Dendritic cell treated with granulocyte-macrophage colony-stimulating factor and Interleukin-4, amounts not matched to agents 40 ng/mL and 50 ng/mL, for 4 days (primary cell): ENCODE measurements at regions of chr7 and their contacts with region 1.

Region 1: GRCh38 chr7:140182917-140183316 is 6.1 kb upstream of the KDM7A start:
- H3K4me3 Mint-ChIP-seq: no peak overlapping the region
- H3K27ac Mint-ChIP-seq: no peak overlapping the region
- H3K4me1 Mint-ChIP-seq: peaks cover 17% of the 10 kb centered on the region
- H3K27me3 Mint-ChIP-seq: peaks cover 40% of the 10 kb centered on the region

Region 2: DNA sequence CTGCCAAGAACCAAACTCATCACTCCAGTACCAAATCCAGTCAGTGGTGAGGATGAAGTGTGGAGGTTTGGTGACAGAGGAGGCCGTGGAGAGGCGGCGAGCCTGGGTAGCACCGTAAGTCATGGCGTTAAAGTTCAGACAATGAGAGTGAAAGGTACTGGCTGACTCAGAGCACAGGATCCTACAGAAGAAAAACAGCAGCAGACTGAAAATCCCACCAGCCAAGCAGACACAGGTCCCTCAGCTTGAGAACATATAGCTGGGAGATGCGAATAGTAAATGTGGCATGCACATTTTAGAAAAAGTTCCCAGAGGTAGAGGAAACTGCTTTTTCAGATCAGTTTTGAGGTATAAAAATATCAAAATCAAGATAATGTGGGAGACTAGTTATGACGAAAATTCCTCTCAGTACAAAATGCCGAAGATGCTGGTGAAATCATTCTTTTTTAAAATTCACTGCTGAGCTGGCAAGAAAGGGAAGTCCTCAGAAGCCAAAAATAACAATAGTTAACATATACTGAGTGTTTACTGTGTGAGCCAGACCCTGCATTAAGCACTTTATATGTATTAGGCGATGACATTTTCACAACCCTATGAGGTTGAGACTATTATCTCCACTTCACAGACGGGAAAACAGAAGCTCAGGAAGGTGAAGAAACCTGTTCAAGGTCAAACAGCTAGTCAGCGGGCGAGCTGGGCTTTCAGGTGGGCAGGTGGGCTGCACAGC is 141.1 kb before region 1 on chr7:
- intact Hi-C with region 1: no loop called
- H3K4me3 Mint-ChIP-seq: no peak overlapping the region
- H3K27ac Mint-ChIP-seq: no peak overlapping the region
- H3K4me1 Mint-ChIP-seq: peaks cover 28% of the 10 kb centered on the region
- H3K27me3 Mint-ChIP-seq: no peaks in the 10 kb centered on the region

Region 3: DNA sequence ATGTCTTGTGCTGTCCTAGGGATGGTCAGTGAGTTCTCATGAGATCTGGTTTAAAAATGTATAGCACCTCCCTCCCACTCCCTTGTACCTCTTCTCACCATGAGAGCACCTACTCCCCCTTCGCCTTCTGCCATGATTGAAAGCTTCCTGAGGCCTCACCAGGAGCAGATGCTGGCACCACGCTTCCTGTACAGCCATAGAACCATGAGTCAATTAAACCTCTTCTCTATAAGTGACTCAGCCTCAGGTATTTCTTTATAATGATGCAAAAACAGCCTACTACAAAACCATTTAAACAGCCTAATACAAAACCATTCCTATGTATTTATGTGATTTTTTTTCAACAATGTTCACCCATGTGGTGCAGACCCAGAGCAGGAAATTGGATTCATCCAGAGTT is 38.1 kb before region 1 on chr7:
- intact Hi-C with region 1: no loop called
- H3K4me3 Mint-ChIP-seq: no peak overlapping the region
- H3K27ac Mint-ChIP-seq: no peak overlapping the region
- H3K4me1 Mint-ChIP-seq: peaks cover 56% of the 10 kb centered on the region
- H3K27me3 Mint-ChIP-seq: no peaks in the 10 kb centered on the region

Region 4: DNA sequence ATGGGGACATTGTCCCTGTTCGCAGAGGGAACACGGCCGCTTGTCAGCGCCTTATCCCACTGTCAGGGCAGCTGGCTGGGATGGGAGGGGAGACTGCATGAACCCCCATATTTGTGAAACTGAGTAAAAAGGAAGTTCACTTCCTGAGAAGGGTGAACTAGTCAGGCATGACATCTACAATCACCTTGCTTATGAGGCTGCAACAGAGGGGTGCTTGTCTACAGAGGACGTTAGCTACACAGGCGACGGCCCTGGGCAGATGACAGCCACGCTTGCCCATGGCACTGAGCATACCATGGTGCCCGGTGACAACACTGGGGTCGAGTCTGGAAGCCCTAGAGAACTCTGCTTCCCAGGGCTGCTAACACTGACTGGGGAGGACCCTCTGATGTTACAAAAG is 39.9 kb after region 1 on chr7:
- intact Hi-C with region 1: loop called (anchors 5 kb)
- H3K4me3 Mint-ChIP-seq: no peak overlapping the region
- H3K27ac Mint-ChIP-seq: peak overlapping the region; percentile 70
- H3K4me1 Mint-ChIP-seq: peaks cover 30% of the 10 kb centered on the region
- H3K27me3 Mint-ChIP-seq: peaks cover 14% of the 10 kb centered on the region

Region 5: GRCh38 chr7:140232957-140233917 is 50.3 kb after region 1 on chr7:
- intact Hi-C with region 1: no loop called
- H3K4me3 Mint-ChIP-seq: peak overlapping the region; percentile 95
- H3K27ac Mint-ChIP-seq: peak overlapping the region; percentile 97
- H3K4me1 Mint-ChIP-seq: peaks cover 63% of the 10 kb centered on the region
- H3K27me3 Mint-ChIP-seq: no peaks in the 10 kb centered on the region